Activated B cell treated with CpG ODN at 0.5 μM for 24 hours (primary cell): ENCODE measurements at regions of chr6 and their contacts with region 1.

Region 1: DNA sequence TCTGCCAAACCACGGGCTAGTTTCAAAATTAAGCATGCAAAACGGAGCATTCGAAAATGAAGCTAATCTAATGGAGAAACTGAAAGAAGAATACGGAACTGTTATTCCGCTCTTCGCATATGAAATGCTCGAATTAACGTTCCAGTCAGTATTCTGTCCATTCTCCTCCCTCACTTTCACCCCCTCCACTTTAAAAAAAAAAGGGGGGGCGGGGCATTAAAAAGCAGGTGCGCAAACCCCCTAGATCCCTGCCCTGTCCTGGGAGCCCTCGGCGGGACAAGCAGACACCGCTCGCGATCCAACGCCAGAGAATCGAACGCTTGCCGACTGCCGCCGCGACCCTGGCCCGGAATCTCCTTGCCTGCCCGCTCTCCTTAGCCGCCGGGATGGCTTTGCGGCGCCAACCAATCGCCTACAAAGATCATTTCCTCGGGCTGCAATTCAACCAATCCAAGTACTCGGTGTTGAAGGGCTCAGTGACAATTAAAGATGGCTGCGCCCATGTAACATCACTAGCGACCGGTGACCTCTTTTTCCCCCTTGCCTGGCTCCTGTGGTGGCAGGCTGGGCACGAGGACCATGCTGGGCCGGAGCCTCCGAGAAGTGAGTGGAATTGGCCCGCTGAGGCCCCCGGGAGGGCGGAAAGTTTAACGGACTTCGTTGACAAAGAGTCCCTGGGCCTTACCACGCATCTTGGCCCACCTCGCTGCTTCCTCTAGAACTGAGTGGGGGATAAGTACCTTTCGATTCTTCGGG is at the starts of genes QRSL1 and RTN4IP1:
- DNase-seq: peak; percentile 74
- ATAC-seq: peak; percentile 84
- H3K4me3 Mint-ChIP-seq: peak within 1 kb of the TSS; percentile 93
- H3K27ac Mint-ChIP-seq: peak within 1 kb of the TSS; percentile 96
- H3K4me1 Mint-ChIP-seq: peaks cover 72% of the 10 kb centered on the region
- H3K27me3 Mint-ChIP-seq: no peaks in the 10 kb centered on the region
- CTCF ChIP-seq: no peak
- total RNA-seq, gene QRSL1: 28.4 and 31.1 TPM in 2 replicates
- total RNA-seq, gene RTN4IP1: 9.9 and 11.2 TPM in 2 replicates

Region 2: DNA sequence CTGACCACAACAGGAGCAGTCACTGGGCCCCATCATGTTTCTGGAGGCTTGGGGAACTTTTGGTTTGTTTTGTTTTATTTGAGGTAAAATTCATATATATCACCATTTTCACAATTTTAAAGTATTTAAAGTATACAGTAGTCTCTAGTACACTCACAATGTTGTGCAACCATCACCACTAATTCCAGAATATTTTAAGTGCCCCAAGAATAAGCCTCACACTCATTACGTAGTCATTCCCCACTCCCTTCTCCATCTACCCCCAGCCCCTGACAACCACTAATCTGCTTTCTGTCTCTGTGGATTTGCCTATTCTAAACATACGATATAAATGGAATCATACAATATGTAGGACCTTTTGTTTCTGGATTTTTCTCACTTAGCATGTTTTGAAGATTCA is 29.0 kb before region 1 on chr6:
- CTCF ChIA-PET with region 1: no interaction called
- POLR2A ChIA-PET with region 1: no interaction called
- intact Hi-C with region 1: no loop called
- DNase-seq: no peak
- ATAC-seq: no peak
- H3K4me3 Mint-ChIP-seq: no peak overlapping the region
- H3K27ac Mint-ChIP-seq: no peak overlapping the region
- H3K4me1 Mint-ChIP-seq: peaks cover 3% of the 10 kb centered on the region
- H3K27me3 Mint-ChIP-seq: no peaks in the 10 kb centered on the region
- CTCF ChIP-seq: no peak

Region 3: GRCh38 chr6:106614592-106615301 is 14.5 kb before region 1 on chr6:
- CTCF ChIA-PET with region 1: interaction called, 10 read pairs
- POLR2A ChIA-PET with region 1: interaction called, 12 read pairs
- intact Hi-C with region 1: loop called (anchors 2 kb)
- DNase-seq: no peak
- ATAC-seq: peak; percentile 37
- H3K4me3 Mint-ChIP-seq: peak overlapping the region; percentile 19
- H3K27ac Mint-ChIP-seq: peak overlapping the region; percentile 77
- H3K4me1 Mint-ChIP-seq: peaks cover 55% of the 10 kb centered on the region
- H3K27me3 Mint-ChIP-seq: no peaks in the 10 kb centered on the region
- CTCF ChIP-seq: no peak

Region 4: DNA sequence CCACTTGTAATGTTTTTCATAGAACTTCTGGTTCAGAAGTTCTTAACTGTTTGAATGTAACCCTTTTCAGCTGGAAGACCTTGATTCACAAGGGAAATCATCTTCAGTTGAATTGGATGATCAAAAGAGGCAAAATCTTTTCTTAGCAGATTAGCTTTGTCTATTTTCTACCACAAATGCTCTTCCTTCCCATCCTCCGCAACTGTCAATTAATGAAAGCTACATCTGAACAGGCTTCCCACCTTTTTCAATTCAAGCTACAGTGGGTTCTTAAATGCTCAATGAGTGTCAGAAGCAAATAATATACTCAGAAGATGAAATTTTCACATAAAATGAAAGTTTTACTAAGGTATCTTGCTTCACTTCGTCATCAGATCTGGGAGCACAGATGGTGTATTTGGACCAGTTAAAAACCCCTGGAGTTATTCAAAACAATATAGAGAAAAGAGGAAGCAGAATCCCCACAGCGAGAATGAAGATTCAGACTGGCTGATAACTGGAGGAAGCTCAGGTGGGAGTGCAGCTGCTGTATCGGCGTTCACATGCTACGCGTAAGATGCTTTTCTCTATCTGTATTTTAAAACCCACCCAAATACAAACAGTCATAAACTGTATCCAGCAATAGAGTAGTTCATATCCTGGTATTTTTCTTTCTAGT is 19.5 kb after region 1 on chr6:
- CTCF ChIA-PET with region 1: no interaction called
- POLR2A ChIA-PET with region 1: interaction called, 19 read pairs
- intact Hi-C with region 1: loop called (anchors 1 kb)
- DNase-seq: no peak
- ATAC-seq: peak; percentile 96
- H3K4me3 Mint-ChIP-seq: peak overlapping the region; percentile 84
- H3K27ac Mint-ChIP-seq: peak overlapping the region; percentile 96
- H3K4me1 Mint-ChIP-seq: peaks cover 48% of the 10 kb centered on the region
- H3K27me3 Mint-ChIP-seq: no peaks in the 10 kb centered on the region
- CTCF ChIP-seq: no peak

Region 5: DNA sequence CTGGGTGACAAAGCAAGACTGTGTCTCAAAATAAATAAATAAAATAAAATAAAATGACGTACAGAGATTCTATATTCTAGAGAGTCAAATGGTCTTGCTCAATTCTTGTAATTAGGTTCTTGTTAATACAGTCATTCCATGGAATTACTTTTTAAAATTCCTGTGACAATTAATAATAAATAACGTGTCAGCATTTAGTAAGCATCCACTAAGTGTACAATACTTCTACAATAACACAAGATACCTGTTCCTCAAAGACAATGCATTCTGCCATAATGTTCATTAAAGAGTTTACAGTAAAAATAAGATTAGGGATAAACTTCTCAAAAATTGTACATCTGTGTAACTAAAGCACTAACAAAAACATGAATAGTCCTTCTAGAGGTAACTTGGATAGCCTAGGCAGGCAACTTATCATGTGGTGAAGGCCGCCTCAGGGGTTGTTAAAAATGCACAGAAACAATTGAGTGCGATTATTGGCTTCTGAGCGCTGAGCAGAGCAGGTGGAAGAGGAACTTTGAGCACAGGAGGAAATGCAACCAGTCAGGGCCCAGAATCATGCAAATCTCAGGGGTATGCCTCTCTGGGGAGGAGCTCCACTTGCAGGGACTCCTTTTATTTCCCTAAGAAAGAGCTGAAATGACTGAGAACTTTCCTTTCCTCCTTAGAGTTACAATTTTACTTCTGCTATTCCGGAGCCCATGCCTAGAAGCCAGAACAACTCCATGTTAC is 37.2 kb after region 1 on chr6:
- CTCF ChIA-PET with region 1: no interaction called
- POLR2A ChIA-PET with region 1: interaction called, 14 read pairs
- intact Hi-C with region 1: loop called (anchors 1 kb)
- DNase-seq: peak; percentile 49
- ATAC-seq: peak; percentile 99
- H3K4me3 Mint-ChIP-seq: peak overlapping the region; percentile 66
- H3K27ac Mint-ChIP-seq: peak overlapping the region; percentile 87
- H3K4me1 Mint-ChIP-seq: peaks cover 66% of the 10 kb centered on the region
- H3K27me3 Mint-ChIP-seq: no peaks in the 10 kb centered on the region
- CTCF ChIP-seq: no peak

Region 6: GRCh38 chr6:106844930-106845329 is 215.6 kb after region 1 on chr6:
- CTCF ChIA-PET with region 1: no interaction called
- POLR2A ChIA-PET with region 1: interaction called, 3 read pairs
- intact Hi-C with region 1: loop called (anchors 2 kb)
- DNase-seq: no peak
- ATAC-seq: peak; percentile 58
- H3K4me3 Mint-ChIP-seq: peak overlapping the region; percentile 41
- H3K27ac Mint-ChIP-seq: peak overlapping the region; percentile 72
- H3K4me1 Mint-ChIP-seq: peaks cover 57% of the 10 kb centered on the region
- H3K27me3 Mint-ChIP-seq: no peaks in the 10 kb centered on the region
- CTCF ChIP-seq: no peak

Region 7: DNA sequence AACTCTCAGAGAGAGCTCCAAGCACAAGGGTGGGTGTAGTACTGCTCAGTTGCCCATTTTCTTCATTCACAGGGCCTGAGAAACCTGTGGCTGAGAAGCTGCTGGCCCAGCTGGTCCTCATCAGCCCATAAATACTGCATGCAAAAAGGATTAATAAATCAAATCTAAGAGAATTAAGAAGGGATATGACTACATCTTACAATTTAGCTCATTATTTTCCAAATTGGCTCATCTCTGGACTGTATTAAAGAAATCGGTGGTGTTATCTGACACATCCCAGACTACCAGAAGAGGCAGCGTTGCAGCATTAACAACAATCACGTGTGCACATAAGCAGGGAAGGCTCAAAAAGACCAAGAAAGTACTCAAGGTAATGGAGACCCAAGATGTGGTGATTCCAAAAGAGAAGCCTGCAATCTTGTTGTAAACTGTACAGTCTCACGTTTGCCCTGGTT is 254.6 kb after region 1 on chr6:
- CTCF ChIA-PET with region 1: no interaction called
- POLR2A ChIA-PET with region 1: no interaction called
- intact Hi-C with region 1: no loop called
- DNase-seq: no peak
- ATAC-seq: no peak
- H3K4me3 Mint-ChIP-seq: no peak overlapping the region
- H3K27ac Mint-ChIP-seq: no peak overlapping the region
- H3K4me1 Mint-ChIP-seq: no peaks in the 10 kb centered on the region
- H3K27me3 Mint-ChIP-seq: no peaks in the 10 kb centered on the region
- CTCF ChIP-seq: no peak

Region 8: DNA sequence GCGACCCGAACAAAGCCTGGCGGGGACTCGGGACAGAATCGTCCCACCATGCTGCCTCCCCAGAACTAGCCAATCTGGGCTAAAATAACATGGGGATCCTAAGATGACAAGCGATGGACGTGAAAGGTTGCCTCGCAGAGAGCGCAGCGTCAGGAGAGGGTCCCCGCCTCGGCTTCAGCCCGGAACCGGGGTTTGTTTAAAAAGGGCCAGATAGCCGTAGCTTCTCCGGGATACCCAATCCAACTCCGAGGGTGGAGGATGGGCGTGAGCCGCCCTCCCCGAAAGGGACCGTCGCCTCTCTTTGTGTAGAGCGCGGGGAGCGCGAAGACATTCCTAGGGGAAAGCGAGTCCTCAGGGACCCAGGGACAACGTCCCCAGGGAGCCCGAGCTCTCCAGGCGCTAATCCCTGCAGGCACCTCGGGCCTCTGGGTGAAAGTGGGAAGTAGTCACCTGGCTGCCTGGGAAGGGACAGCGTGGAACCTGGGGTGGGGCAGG is 344.6 kb after region 1 on chr6:
- CTCF ChIA-PET with region 1: interaction called, 9 read pairs
- POLR2A ChIA-PET with region 1: interaction called, 5 read pairs
- intact Hi-C with region 1: loop called (anchors 1 kb)
- DNase-seq: no peak
- ATAC-seq: peak; percentile 10
- H3K4me3 Mint-ChIP-seq: peak overlapping the region; percentile 93
- H3K27ac Mint-ChIP-seq: peak overlapping the region; percentile 85
- H3K4me1 Mint-ChIP-seq: peaks cover 39% of the 10 kb centered on the region
- H3K27me3 Mint-ChIP-seq: no peaks in the 10 kb centered on the region
- CTCF ChIP-seq: no peak

Region 9: GRCh38 chr6:108211644-108212043 is 1582.4 kb after region 1 on chr6:
- CTCF ChIA-PET with region 1: no interaction called
- POLR2A ChIA-PET with region 1: no interaction called
- intact Hi-C with region 1: no loop called
- DNase-seq: no peak
- ATAC-seq: no peak
- H3K4me3 Mint-ChIP-seq: no peak overlapping the region
- H3K27ac Mint-ChIP-seq: no peak overlapping the region
- H3K4me1 Mint-ChIP-seq: no peaks in the 10 kb centered on the region
- H3K27me3 Mint-ChIP-seq: no peaks in the 10 kb centered on the region
- CTCF ChIP-seq: no peak